HEK293 (cell line): ENCODE measurements at regions of chr5 and their contacts with region 1.

Region 1: GRCh38 chr5:177071666-177072385 is 14.9 kb upstream of the FGFR4 start:
- H3K4me3 ChIP-seq: no peak overlapping the region
- H3K27ac ChIP-seq: no peak overlapping the region
- H3K4me1 ChIP-seq: no peaks in the 10 kb centered on the region
- CTCF ChIP-seq: peak; percentile 41; the same call in 1 of the 2 replicates

Region 2: GRCh38 chr5:177040814-177041420 is 30.9 kb before region 1 on chr5:
- CTCF ChIA-PET with region 1: interaction called, 10 read pairs
- POLR2A ChIA-PET with region 1: no interaction called
- H3K4me3 ChIP-seq: no peak overlapping the region
- H3K27ac ChIP-seq: no peak overlapping the region
- H3K4me1 ChIP-seq: no peaks in the 10 kb centered on the region
- CTCF ChIP-seq: no peak

Region 3: GRCh38 chr5:177086924-177087706 is 15.3 kb after region 1 on chr5:
- CTCF ChIA-PET with region 1: interaction called, 53 read pairs
- POLR2A ChIA-PET with region 1: interaction called, 3 read pairs
- H3K4me3 ChIP-seq: peak overlapping the region; percentile 47
- H3K27ac ChIP-seq: no peak overlapping the region
- H3K4me1 ChIP-seq: no peaks in the 10 kb centered on the region; the same call in 1 of the 2 replicates
- CTCF ChIP-seq: peak; percentile 95

Region 4: GRCh38 chr5:177537389-177538361 is 465.8 kb after region 1 on chr5:
- CTCF ChIA-PET with region 1: no interaction called
- POLR2A ChIA-PET with region 1: interaction called, 10 read pairs
- H3K4me3 ChIP-seq: no peak overlapping the region
- H3K27ac ChIP-seq: no peak overlapping the region
- H3K4me1 ChIP-seq: no peaks in the 10 kb centered on the region
- CTCF ChIP-seq: no peak